ENCODE measurements at regions of chr6 and their contacts with region 1.

Region 1: DNA sequence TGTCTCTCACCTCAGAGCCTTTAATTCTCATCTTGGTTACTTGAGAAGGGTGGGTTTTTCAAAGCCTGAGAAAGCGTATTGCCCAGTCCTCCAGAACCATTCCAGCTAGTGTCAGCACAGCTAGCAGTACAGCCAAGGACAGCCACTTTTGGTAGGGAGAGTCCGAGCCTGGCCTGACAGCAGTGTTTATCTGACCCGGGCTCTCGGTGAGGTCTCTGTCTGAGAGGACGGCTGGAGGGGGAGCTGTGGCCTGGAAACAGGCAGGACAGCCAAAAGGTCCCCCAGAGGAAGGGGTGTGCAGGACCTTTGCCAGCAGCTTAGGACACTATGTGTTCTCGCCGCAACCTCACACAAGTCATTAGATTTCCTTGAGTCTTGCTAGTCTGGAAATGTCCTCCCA is 38.8 kb downstream of the LYRM2 start:
- DNase-seq: no peak
- H3K4me3 ChIP-seq: no peak overlapping the region
- H3K27ac ChIP-seq: no peak overlapping the region
- H3K4me1 ChIP-seq: no peaks in the 10 kb centered on the region
- H3K27me3 ChIP-seq: no peaks in the 10 kb centered on the region
- CTCF ChIP-seq: no peak
- POLR2A ChIP-seq: no peak

Region 2: GRCh38 chr6:89432875-89433251 is 166.9 kb before region 1 on chr6 and contains the start of gene ANKRD6:
- intact Hi-C with region 1: loop called (anchors 10 kb)
- DNase-seq: peak; percentile 67 to 75
- H3K4me3 ChIP-seq: peak within 1 kb of the TSS; percentile 76 to 89 (median 85)
- H3K27ac ChIP-seq: peak within 1 kb of the TSS; percentile 16 to 69
- H3K4me1 ChIP-seq: peaks cover 0 to 2% of the 10 kb centered on the region in 2 donors
- H3K27me3 ChIP-seq: no peaks in the 10 kb centered on the region
- CTCF ChIP-seq: peak; percentile 48 to 90 (median 52)
- POLR2A ChIP-seq: no peak
- total RNA-seq, gene ANKRD6: 9.6 to 23.7 (median 18.0) TPM